ENCODE measurements at regions of chr21 and their contacts with region 1.

Region 1: DNA sequence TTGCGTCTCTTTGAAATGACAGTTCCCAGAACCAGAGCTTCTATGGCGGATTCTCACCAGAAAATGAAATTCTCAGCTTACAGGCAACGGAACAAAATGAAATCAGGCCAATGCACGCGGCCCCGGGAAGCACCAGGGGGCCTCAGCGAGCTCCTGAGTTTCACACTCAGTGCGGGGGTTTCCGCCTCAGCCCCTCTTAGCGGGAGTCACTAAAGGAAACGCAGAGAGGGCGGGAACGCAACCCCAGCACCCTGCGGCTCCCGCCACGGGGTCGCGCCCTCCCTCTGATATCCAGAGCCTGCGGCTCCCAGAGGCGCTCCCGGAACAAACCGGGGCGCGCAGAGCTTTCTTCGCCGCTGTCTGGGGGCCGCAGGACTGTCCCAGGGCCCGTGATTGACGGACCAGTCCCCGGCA is 7.9 kb upstream of the COL6A1 start:
- DNase-seq: peak; percentile 89
- ATAC-seq: peak; percentile 80
- H3K4me3 Mint-ChIP-seq: peak overlapping the region; percentile 51
- H3K27ac Mint-ChIP-seq: peak overlapping the region; percentile 60
- H3K4me1 Mint-ChIP-seq: peaks cover 16% of the 10 kb centered on the region
- H3K27me3 Mint-ChIP-seq: peaks cover 18% of the 10 kb centered on the region

Region 2: DNA sequence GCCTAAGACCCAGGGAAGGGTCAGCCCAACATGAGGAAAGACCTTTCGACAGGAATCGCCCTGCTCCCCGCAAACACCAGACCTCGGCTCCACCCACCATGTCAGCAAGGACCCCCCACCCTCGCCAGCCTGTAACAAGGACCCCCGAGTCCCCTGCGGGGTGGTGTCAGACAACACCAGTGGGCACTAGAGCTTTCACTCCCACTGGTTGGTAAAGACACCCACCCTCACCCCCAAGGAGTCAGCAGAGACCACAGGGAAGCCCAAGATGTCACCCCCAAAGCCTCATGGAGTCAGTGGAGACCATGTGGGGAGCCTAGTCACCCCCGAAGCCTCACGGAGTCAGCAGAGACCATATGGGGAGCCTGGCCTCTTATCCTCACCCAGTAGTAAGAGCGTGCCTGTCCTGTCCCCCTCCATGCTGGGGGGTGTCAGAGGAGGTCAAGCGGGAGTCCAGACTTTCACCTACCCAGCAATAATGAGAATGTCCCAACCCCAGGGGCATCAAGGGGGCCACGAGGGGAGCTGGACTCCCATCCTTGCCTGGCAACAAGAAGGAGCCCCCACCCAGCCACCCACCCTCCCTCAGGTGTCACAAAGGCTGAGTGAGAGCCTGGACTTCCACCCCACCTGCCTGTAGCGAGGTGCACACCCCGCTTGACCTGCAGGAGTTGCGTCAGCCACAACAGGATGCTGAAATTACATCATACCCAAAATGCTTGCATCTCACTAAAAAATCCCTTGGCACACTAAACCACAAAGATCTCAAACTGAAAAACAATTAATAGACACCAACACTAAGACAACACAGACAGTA is 456.2 kb before region 1 on chr21:
- CTCF ChIA-PET with region 1: no interaction called
- POLR2A ChIA-PET with region 1: no interaction called
- intact Hi-C with region 1: no loop called
- DNase-seq: peak; percentile 39
- ATAC-seq: peak; percentile 67
- H3K4me3 Mint-ChIP-seq: peak overlapping the region; percentile 20
- H3K27ac Mint-ChIP-seq: peak overlapping the region; percentile 91
- H3K4me1 Mint-ChIP-seq: peaks cover 13% of the 10 kb centered on the region
- H3K27me3 Mint-ChIP-seq: no peaks in the 10 kb centered on the region

Region 3: GRCh38 chr21:45747802-45748445 is 225.7 kb before region 1 on chr21:
- CTCF ChIA-PET with region 1: no interaction called
- POLR2A ChIA-PET with region 1: no interaction called
- intact Hi-C with region 1: no loop called
- DNase-seq: peak; percentile 40
- ATAC-seq: peak; percentile 61
- H3K4me3 Mint-ChIP-seq: no peak overlapping the region
- H3K27ac Mint-ChIP-seq: no peak overlapping the region
- H3K4me1 Mint-ChIP-seq: peaks cover 11% of the 10 kb centered on the region
- H3K27me3 Mint-ChIP-seq: no peaks in the 10 kb centered on the region

Region 4: GRCh38 chr21:46052703-46053651 is 79.3 kb after region 1 on chr21:
- CTCF ChIA-PET with region 1: no interaction called
- POLR2A ChIA-PET with region 1: no interaction called
- intact Hi-C with region 1: loop called in 1 of 2 experiments (anchors 2 kb)
- DNase-seq: peak; percentile 67
- ATAC-seq: peak; percentile 78
- H3K4me3 Mint-ChIP-seq: no peak overlapping the region
- H3K27ac Mint-ChIP-seq: peak overlapping the region; percentile 47
- H3K4me1 Mint-ChIP-seq: peaks cover 21% of the 10 kb centered on the region
- H3K27me3 Mint-ChIP-seq: peaks cover 13% of the 10 kb centered on the region

Region 5: DNA sequence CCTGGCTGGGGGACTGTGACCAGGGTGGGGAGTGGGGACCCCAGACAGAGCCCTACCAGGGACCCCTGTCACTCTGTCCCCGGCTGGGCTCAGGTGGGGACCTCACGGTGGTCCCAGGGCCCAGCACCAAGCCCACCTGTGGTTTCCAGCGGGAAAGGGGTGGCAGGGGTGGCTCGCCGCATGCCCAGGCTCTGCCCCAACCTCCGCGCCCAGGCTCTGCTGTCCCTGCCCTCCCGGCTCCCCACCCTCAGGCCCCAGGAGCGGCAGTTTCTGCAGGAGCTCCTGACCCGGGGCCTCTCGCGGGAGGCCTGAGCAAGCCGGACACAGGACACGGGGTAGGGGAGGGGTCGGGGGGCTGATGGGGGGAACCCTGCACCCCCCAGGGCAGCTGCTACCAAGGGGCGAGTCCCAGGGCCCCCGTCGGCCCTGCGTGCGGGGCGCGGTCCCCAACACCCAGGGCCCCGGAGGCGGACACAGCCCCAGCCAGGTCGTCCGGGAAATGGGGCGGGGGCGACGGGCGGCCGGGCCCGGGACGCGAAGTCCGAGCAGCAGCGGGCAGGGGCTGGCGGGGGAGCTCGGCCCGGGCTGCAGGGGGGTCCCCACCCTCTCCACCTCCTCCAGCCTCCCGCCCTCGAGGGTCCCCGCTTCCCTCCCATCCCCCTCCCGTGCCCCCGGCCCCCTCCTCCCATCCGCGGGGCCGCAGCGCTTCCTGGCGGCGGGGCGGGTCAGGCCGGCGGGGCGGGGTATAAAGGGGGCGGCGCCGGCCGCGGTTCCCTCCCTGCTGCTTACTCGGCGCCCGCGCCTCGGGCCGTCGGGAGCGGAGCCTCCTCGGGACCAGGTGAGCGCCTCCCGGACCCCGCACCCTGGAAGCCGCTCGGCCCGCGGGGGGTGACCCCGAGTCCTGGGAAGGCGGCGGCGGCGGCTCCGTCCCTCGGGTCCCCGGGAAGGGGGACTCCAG is 123.9 kb after region 1 on chr21 and contains the start of gene COL6A2:
- CTCF ChIA-PET with region 1: no interaction called
- POLR2A ChIA-PET with region 1: no interaction called
- intact Hi-C with region 1: loop called (anchors 2 to 5 kb)
- DNase-seq: peak; percentile 77
- ATAC-seq: peak; percentile 96
- H3K4me3 Mint-ChIP-seq: peak within 1 kb of the TSS; percentile 52
- H3K27ac Mint-ChIP-seq: no peak within 1 kb of the TSS
- H3K4me1 Mint-ChIP-seq: peaks cover 2% of the 10 kb centered on the region
- H3K27me3 Mint-ChIP-seq: peaks cover 22% of the 10 kb centered on the region
- total RNA-seq, gene COL6A2: 3.3 to 3.4 TPM

Region 6: DNA sequence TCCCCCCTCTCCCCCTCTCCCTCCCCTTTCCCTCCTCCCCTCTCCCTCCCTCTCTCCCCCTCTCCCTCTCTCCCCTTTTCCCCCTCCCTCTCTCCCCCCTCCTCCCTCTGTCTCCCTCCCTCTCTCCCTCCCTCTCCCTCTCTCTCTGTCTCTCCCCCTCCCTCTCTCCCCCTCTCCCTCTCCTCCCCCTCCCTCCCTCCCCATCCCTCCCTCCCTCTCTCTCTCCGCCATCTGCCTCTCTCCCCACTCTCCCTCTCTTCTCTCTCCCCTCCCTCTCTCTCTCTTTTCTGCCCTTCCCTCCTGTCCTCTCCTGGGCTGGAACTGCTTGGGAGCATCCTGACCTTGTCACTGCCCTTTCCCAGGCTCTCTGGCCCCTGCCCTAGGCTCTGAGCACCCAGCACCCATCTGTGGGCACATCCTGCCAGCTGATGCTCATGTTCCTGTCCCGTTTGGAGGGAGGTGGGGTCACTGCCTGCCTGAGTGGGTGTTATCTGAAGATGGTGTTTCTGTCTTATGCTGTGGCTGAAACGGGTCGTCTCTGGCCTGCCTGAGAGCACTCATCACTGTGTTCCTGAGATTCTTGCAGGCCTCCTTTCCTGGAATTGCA is 170.9 kb after region 1 on chr21:
- CTCF ChIA-PET with region 1: no interaction called
- POLR2A ChIA-PET with region 1: no interaction called
- intact Hi-C with region 1: loop called (anchors 1 to 5 kb)
- DNase-seq: peak; percentile 40
- ATAC-seq: no peak
- H3K4me3 Mint-ChIP-seq: no peak overlapping the region
- H3K27ac Mint-ChIP-seq: peak overlapping the region; percentile 34
- H3K4me1 Mint-ChIP-seq: peaks cover 12% of the 10 kb centered on the region
- H3K27me3 Mint-ChIP-seq: no peaks in the 10 kb centered on the region

Region 7: DNA sequence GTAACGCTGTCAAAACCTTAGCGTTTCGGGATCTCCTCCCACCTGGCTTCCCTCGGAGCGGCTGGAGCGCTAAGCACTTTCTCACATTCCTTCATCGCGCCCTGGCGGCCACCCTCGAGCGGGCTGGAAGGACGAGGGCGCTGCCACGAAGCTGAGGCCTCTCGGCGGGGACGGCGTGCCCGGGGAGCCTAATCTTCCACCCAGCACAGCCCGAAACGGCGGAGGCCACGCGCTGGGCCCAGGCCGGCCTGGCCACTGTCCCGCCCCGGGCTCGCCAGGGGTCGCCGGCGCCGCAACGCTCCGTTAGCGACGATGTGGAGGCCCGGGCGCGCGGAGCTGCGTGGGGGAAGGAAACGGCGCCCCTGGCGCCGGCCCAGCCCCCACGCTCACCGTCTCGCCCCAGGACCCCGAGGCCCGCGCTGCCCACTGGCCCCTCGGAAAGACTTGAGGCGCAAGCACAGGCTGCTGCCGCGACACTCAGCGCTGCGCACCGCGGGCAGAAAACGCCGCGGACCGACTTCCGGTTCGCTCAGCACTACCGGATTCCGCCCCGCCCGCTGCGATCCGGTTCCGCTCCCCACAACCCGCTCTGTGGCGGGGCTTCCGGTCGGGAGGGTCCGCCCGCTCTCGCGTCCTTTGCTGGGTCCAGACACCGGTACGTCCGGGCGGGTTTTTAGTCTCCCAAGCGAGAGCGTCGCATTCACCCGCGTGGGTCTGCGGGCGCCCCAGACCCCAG is 312.3 kb after region 1 on chr21 and contains the start of gene YBEY:
- CTCF ChIA-PET with region 1: no interaction called
- POLR2A ChIA-PET with region 1: no interaction called
- intact Hi-C with region 1: loop called in 1 of 2 experiments (anchors 2 kb)
- DNase-seq: peak; percentile 94
- ATAC-seq: peak; percentile 94
- H3K4me3 Mint-ChIP-seq: peak within 1 kb of the TSS; percentile 88
- H3K27ac Mint-ChIP-seq: peak within 1 kb of the TSS; percentile 98
- H3K4me1 Mint-ChIP-seq: peaks cover 52% of the 10 kb centered on the region
- H3K27me3 Mint-ChIP-seq: no peaks in the 10 kb centered on the region
- total RNA-seq, gene YBEY: 16.9 to 20.6 TPM

Region 8: DNA sequence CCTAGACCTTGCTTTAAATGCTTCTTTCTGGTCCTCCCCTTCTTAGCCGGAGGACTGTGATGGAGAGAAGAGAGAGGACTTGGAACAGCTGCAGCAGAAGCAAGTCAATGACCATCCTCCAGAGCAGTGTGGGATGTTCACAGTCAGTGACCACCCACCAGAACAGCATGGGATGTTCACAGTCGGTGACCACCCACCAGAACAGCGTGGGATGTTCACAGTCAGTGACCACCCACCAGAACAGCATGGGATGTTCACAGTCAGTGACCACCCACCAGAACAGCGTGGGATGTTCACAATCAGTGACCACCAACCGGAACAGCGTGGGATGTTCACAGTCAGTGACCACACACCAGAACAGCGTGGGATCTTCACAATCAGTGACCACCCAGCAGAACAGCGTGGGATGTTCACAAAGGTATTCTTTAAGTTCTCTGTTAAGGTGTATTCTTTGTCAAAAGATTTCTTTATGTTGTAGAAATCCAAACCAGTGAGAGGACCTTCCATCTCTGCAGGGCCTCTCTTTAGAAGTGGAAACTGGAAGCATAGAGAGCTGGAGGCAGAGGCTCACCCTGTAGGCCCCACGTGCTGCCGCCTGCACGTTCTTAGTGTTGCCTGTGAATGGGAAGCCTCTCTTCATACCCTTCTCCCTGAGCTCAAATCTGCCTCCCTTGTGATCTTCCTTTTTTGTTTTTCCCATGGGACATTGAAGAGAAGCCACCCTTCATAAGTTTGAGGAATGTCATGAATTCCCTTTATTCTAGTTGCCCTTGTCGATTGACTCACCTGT is 360.9 kb after region 1 on chr21:
- CTCF ChIA-PET with region 1: no interaction called
- POLR2A ChIA-PET with region 1: no interaction called
- intact Hi-C with region 1: no loop called
- DNase-seq: no peak
- ATAC-seq: no peak
- H3K4me3 Mint-ChIP-seq: no peak overlapping the region
- H3K27ac Mint-ChIP-seq: no peak overlapping the region
- H3K4me1 Mint-ChIP-seq: no peaks in the 10 kb centered on the region
- H3K27me3 Mint-ChIP-seq: no peaks in the 10 kb centered on the region